Right cardiac atrium (tissue), 5 donors: ENCODE measurements at regions of chr21 and their contacts with region 1.

Region 1: DNA sequence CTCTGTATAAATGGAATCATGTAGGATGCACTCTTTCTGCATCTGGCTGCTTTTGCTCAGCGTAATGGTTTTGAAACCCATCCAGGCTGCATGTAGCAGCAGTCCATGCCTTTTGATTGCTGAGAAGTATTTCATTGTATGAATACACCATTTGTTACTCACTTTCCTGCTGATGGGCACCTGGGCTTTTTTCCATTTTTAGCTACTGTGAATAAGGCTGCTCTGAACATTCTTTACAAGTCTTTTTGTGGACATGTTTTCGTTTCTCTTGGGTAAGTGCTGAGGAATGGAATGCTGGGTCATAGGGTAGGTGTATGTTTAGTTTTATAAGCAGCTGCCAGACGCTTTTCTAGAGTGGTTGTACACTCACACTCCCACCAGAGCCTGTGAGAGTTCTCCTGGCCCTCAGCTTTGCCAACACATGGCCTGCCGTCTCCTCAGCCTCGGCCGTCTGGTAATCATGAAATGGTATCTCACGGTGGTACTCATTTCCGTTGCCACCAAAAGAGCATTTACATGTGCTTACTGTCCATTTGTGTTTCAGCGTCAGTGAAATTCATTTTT is 22.7 kb downstream of the SLX9 start:
- DNase-seq: peak; percentile 19 to 62 (median 42)
- ATAC-seq: peak in 1 of 2 donors; percentile 9
- H3K4me3 ChIP-seq: no peak overlapping the region
- H3K27ac ChIP-seq: peak overlapping the region; percentile 22
- H3K4me1 ChIP-seq: peaks cover 18% of the 10 kb centered on the region
- H3K27me3 ChIP-seq: no peaks in the 10 kb centered on the region

Region 2: DNA sequence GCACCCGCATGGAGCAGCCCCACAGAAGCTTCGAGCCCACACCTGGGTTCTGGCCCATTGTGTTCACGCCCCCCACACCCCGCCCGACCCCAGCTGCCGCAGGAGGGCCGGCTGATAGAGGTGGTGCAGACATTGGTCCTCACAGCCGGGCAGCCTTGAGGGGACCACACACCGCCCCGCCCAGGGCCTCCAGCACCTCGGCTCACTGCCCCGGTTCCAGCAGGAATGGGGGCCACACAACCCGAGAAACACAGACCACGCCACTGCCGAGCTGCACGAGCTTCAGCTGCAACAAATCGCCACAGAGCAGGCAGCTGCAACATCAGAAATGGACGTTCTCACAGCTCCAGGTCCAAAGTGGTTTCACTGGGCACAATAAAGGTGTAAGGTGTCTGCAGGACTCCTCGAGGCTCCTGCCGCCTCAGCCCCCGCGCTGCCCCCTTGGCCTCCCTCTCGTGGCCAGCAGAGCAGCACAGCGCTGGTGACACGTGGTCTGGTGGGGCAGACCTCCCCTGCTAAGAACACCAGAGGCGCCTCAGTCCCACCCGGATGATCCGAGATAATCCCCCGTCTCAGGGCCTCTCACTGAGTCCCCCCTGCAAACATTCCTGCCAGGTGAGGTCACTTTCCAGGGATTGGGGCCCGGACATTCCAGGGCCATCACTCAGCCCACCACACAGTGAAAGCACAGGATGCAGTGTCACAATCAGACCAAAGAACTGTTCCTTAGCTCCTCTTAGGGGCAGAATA is 49.6 kb after region 1 on chr21:
- intact Hi-C with region 1: loop called in 2 of 4 experiments (anchors 10 kb)
- DNase-seq: peak; percentile 11 to 58 (median 47)
- ATAC-seq: peak; percentile 17 to 59
- H3K4me3 ChIP-seq: no peak overlapping the region
- H3K27ac ChIP-seq: no peak overlapping the region
- H3K4me1 ChIP-seq: peaks cover 3% of the 10 kb centered on the region
- H3K27me3 ChIP-seq: no peaks in the 10 kb centered on the region

Region 3: DNA sequence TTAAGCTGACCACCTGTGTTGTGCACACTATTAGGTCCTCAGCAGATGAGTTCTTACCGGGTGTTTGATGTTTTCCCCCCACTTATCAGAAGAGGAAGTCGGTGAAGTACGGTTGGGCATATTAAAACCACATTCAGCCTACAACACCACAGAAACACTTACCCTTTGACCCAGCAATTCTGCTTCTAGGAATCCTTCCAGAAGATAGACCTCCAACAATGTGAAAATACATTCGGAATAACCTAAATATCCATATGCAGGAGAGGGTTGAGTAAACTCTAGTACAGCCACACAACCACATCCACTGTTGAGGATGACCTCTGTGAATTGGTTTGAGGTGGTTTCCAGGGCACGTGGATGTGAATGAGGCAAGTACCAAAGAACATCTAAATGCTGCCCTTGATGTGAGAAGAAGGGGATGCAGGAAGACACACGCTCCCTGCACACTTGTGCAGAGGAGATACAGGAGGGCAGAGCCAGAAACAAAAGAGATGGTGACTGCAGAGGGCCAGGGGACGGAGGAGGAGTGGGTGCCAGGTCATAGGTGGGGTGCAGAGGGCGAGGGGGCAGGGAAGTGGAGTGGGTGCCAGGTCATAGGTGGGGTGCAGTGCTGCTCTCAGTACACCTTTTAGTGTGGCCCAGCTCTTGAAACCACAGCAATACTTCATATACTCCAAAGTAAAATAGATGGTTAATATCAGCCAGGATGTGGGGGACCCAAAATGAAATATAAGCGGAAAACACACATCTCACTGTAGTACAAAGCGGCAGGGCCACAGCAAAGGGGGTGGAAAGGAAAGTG is 124.7 kb after region 1 on chr21:
- intact Hi-C with region 1: no loop called
- DNase-seq: no peak
- ATAC-seq: no peak
- H3K4me3 ChIP-seq: no peak overlapping the region
- H3K27ac ChIP-seq: no peak overlapping the region
- H3K4me1 ChIP-seq: peaks cover 10% of the 10 kb centered on the region
- H3K27me3 ChIP-seq: no peaks in the 10 kb centered on the region